H1 (cell line): ENCODE measurements at regions of chr18 and their contacts with region 1.

Region 1: GRCh38 chr18:56789004-56789888 is 138.1 kb downstream of the WDR7 start:
- DNase-seq: peak in 1 of 2 experiments; percentile 78
- H3K4me3 ChIP-seq: no peak overlapping the region
- H3K27ac ChIP-seq: no peak overlapping the region
- H3K4me1 ChIP-seq: no peaks in the 10 kb centered on the region
- H3K27me3 ChIP-seq: no peaks in the 10 kb centered on the region
- CTCF ChIP-seq: peak in 2 of 3 experiments; percentile 65 to 80; a peak in 3 of 4 replicates
- EP300 ChIP-seq: no peak
- POLR2A ChIP-seq: no peak
- RAD21 ChIP-seq: peak; percentile 81 to 85

Region 2: GRCh38 chr18:56738184-56738583 is 51.1 kb before region 1 on chr18:
- CTCF ChIA-PET with region 1: no interaction called
- POLR2A ChIA-PET with region 1: no interaction called
- DNase-seq: no peak
- H3K4me3 ChIP-seq: no peak overlapping the region
- H3K27ac ChIP-seq: no peak overlapping the region
- H3K4me1 ChIP-seq: no peaks in the 10 kb centered on the region
- H3K27me3 ChIP-seq: no peaks in the 10 kb centered on the region
- CTCF ChIP-seq: no peak
- EP300 ChIP-seq: no peak
- POLR2A ChIP-seq: no peak
- RAD21 ChIP-seq: no peak

Region 3: DNA sequence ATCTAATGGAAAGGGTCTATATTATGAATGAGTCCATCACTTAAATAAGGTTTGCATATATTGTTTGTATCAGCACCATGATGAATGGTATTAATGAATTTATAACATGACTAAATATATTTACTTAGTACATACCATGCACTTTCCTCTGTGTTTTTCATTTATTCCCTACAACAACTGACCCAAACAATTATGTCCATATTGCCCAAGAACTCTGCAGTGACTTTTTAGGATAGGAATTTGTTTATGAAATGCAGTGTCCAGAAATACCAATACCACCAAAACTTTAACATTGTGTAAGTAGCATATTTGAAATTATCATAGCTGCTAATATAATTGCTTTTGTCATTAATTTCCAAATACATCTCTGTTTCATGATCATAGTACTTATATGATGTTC is 18.4 kb before region 1 on chr18:
- CTCF ChIA-PET with region 1: interaction called, 13 read pairs
- POLR2A ChIA-PET with region 1: no interaction called
- DNase-seq: no peak
- H3K4me3 ChIP-seq: no peak overlapping the region
- H3K27ac ChIP-seq: no peak overlapping the region
- H3K4me1 ChIP-seq: no peaks in the 10 kb centered on the region
- H3K27me3 ChIP-seq: no peaks in the 10 kb centered on the region
- CTCF ChIP-seq: no peak
- EP300 ChIP-seq: no peak
- POLR2A ChIP-seq: no peak
- RAD21 ChIP-seq: no peak

Region 4: GRCh38 chr18:56807901-56808300 is 18.7 kb after region 1 on chr18:
- CTCF ChIA-PET with region 1: interaction called, 11 read pairs
- POLR2A ChIA-PET with region 1: no interaction called
- DNase-seq: no peak
- H3K4me3 ChIP-seq: no peak overlapping the region
- H3K27ac ChIP-seq: no peak overlapping the region
- H3K4me1 ChIP-seq: no peaks in the 10 kb centered on the region
- H3K27me3 ChIP-seq: no peaks in the 10 kb centered on the region
- CTCF ChIP-seq: no peak
- EP300 ChIP-seq: no peak
- POLR2A ChIP-seq: no peak
- RAD21 ChIP-seq: no peak

Region 5: GRCh38 chr18:56995579-56996188 is 206.4 kb after region 1 on chr18:
- CTCF ChIA-PET with region 1: interaction called, 11 read pairs
- POLR2A ChIA-PET with region 1: no interaction called
- DNase-seq: no peak
- H3K4me3 ChIP-seq: no peak overlapping the region
- H3K27ac ChIP-seq: no peak overlapping the region
- H3K4me1 ChIP-seq: no peaks in the 10 kb centered on the region
- H3K27me3 ChIP-seq: no peaks in the 10 kb centered on the region
- CTCF ChIP-seq: peak; percentile 41 to 61 (median 55)
- EP300 ChIP-seq: no peak
- POLR2A ChIP-seq: no peak
- RAD21 ChIP-seq: peak; percentile 82 to 85